Activated CD4-positive, alpha-beta T cell treated with anti-CD3 and anti-CD28 coated beads, Interleukin-2, amount 10 ng/mL, durations not matched to agents 24 days and 14 days (primary cell): ENCODE measurements at regions of chr6 and their contacts with region 1.

Region 1: GRCh38 chr6:158686791-158687381 is 37.0 kb downstream of the SYTL3 start:
- DNase-seq: peak; percentile 90
- H3K4me3 Mint-ChIP-seq: peak overlapping the region; percentile 53
- H3K27ac Mint-ChIP-seq: peak overlapping the region; percentile 86
- H3K4me1 Mint-ChIP-seq: peaks cover 47% of the 10 kb centered on the region
- H3K27me3 Mint-ChIP-seq: no peaks in the 10 kb centered on the region

Region 2: DNA sequence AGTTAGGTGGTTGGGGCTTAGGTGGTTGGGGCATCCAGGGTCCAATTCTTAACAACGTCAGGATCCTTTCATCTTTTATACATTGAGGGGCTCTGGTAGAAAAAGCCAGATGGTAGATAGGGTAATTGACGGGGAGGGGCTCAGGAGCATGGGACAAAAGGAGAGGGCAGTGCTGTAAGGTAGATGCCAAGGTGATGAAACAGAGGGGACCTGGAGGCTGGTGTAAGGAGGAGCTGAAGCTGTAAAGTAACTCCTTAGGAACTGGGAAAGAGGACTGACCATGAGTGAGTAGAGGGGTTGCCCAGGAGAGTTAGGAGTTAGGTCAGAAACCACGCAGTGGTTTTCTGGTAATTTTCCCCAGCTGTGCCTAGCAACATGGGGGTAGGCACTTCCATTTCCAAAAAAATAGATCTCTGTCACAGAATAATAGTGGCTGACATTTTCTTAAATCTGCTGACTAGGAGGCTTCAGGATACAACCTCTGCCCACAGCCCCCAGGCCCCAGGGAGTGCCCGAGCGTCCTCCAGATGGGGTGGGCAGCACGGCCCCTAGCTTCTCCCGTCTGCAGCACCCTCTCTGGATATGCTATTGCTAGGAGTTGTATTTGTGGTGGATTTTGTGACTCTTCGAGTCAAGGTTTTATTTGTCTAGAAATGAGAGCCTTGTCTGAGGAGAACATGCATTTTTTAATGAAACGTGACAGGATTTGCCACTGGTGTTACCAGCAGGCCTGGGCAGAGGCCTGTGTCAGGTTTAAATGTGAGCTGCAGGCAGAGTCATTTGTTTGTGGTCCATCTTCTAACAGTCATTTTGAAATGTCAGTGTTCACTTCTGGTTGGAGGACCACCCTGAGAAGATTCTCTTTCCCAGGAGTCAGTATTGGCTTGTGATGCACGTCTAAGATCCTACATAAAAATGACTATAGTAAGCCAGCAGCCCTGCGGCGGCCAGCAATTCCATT is 330.0 kb before region 1 on chr6:
- intact Hi-C with region 1: no loop called
- DNase-seq: no peak
- H3K4me3 Mint-ChIP-seq: no peak overlapping the region
- H3K27ac Mint-ChIP-seq: no peak overlapping the region
- H3K4me1 Mint-ChIP-seq: peaks cover 27% of the 10 kb centered on the region
- H3K27me3 Mint-ChIP-seq: no peaks in the 10 kb centered on the region

Region 3: GRCh38 chr6:158660333-158660754 is 26.5 kb before region 1 on chr6:
- intact Hi-C with region 1: loop called (anchors 1 kb)
- DNase-seq: peak; percentile 83
- H3K4me3 Mint-ChIP-seq: no peak overlapping the region
- H3K27ac Mint-ChIP-seq: peak overlapping the region; percentile 15
- H3K4me1 Mint-ChIP-seq: peaks cover 35% of the 10 kb centered on the region
- H3K27me3 Mint-ChIP-seq: no peaks in the 10 kb centered on the region

Region 4: DNA sequence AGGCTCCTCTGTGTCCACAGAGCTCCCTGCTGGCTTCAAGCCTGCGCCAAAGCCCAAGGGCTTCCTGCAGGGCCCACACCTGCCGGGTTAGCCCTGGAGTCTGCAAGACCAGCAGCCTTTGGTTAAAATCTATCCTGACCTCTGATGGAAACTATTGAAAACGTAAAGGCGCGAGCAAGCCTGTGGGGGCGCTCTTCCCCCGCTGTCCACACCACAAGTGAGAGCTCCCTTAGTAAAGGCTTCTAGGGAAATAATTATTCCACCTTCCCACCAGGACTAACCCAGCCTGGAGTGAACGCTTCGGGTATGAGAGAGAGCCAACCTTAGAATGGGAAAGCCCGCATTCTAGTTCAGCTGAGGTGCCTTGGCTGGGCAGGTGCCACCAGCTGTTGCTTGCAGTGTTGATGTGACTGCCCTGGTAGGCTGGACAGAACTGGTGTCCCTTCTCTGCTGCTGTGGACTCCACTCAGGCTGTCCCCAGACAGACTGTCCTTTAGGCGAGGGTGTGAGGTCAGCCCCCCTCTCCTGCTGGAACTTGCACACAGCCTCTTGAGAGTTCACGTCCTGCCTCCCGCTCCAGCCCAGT is 31.7 kb after region 1 on chr6:
- intact Hi-C with region 1: no loop called
- DNase-seq: no peak
- H3K4me3 Mint-ChIP-seq: no peak overlapping the region
- H3K27ac Mint-ChIP-seq: no peak overlapping the region
- H3K4me1 Mint-ChIP-seq: peaks cover 58% of the 10 kb centered on the region
- H3K27me3 Mint-ChIP-seq: no peaks in the 10 kb centered on the region